PC-9 (cell line): ENCODE measurements at regions of chr16 and their contacts with region 1.

Region 1: DNA sequence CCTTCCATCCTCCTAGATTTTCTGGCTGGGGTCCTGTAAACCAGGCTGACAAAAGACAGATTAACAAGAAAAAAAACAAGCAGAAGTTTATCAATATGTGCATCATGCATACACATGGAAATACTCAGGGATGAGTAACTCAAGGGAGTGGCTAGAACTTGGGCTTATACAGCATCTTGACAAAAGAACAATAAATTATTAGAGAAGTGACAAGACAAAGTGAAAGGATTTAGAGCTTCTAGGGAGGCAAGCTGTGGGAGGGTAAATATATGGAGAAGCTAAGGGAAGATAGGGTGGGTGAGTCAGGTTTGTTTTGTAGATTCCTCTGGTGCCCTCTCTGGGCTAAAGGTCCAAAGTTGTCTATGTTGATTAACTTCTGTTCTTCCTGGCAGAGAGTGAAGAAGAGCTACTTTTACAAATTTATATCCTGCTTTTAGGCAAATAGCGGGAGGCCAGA is 48.0 kb upstream of the NDRG4 start:
- DNase-seq: peak in 1 of 2 experiments; percentile 85
- H3K4me3 ChIP-seq: no peak overlapping the region
- H3K27ac ChIP-seq: peak overlapping the region; percentile 41
- H3K4me1 ChIP-seq: peaks cover 39% of the 10 kb centered on the region
- H3K27me3 ChIP-seq: no peaks in the 10 kb centered on the region
- CTCF ChIP-seq: no peak

Region 2: GRCh38 chr16:58435779-58436178 is 16.2 kb before region 1 on chr16:
- CTCF ChIA-PET with region 1: no interaction called
- POLR2A ChIA-PET with region 1: interaction called, 13 read pairs
- intact Hi-C with region 1: no loop called
- DNase-seq: no peak
- H3K4me3 ChIP-seq: no peak overlapping the region
- H3K27ac ChIP-seq: no peak overlapping the region
- H3K4me1 ChIP-seq: peaks cover 14% of the 10 kb centered on the region
- H3K27me3 ChIP-seq: no peaks in the 10 kb centered on the region
- CTCF ChIP-seq: no peak; the same call in 1 of the 2 replicates

Region 3: GRCh38 chr16:58906981-58907715 is 455.2 kb after region 1 on chr16:
- CTCF ChIA-PET with region 1: no interaction called
- POLR2A ChIA-PET with region 1: no interaction called
- intact Hi-C with region 1: no loop called
- DNase-seq: no peak
- H3K4me3 ChIP-seq: no peak overlapping the region
- H3K27ac ChIP-seq: no peak overlapping the region
- H3K4me1 ChIP-seq: no peaks in the 10 kb centered on the region
- H3K27me3 ChIP-seq: peaks cover 3% of the 10 kb centered on the region; the same call in 1 of the 2 replicates
- CTCF ChIP-seq: no peak

Region 4: DNA sequence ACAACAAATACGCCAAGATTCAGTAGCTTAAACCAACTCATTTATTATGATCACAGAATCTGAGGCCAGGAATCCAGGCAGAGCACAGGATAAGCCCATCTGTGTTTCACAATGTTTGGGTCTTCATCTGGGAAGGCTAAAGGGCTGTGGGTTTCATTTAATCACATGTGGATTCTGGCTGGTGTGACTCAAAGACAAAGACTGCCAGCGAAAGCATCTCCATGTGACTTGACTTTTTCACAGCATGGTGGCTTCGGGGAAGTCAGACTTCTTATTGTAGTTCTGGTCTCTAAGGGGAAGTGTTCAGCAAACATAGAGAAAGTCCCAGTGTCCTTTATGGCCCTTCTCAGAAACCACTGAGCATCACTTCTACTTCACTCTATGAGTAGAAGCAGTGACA is 1296.6 kb after region 1 on chr16:
- CTCF ChIA-PET with region 1: no interaction called
- POLR2A ChIA-PET with region 1: no interaction called
- intact Hi-C with region 1: no loop called
- DNase-seq: no peak
- H3K4me3 ChIP-seq: no peak overlapping the region
- H3K27ac ChIP-seq: no peak overlapping the region
- H3K4me1 ChIP-seq: no peaks in the 10 kb centered on the region
- H3K27me3 ChIP-seq: no peaks in the 10 kb centered on the region
- CTCF ChIP-seq: no peak